MCF 10A (cell line): ENCODE measurements at regions of chr6 and their contacts with region 1.

Region 1: DNA sequence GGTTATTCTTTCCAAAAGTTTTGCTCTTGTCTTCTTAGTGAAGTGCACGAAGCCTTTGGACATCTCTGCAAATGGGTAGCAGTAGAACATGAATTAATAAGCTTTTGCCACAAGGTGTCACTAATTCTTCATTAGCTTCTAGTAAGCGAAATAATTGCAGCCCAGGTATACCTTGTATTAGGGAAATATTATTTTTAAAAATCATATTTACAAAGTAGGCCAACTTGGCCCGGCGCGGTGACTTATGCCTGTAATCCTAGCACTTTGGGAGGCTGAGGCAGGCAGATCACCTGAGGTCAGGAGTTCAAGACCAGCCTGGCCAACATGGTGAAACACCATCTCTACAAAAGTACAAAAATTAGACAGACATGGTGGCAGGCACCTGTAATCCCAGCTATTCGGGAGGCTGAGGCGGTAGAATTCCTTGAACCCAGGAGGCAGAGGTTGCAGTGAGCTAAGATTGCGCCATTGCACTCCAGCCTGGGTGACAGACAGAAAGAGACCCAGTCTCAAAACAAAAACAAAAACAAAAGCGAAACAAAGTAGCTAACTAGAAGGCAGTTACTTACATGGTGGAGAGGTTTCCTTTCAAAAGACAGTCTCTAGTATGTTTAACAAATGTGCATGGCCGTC is 8.8 kb upstream of the RSPH3 start:
- DNase-seq: peak; percentile 53
- H3K4me3 Mint-ChIP-seq: no peak overlapping the region
- H3K27ac Mint-ChIP-seq: no peak overlapping the region
- H3K4me1 Mint-ChIP-seq: no peaks in the 10 kb centered on the region
- H3K27me3 Mint-ChIP-seq: no peaks in the 10 kb centered on the region
- CTCF ChIP-seq: peak; percentile 42

Region 2: DNA sequence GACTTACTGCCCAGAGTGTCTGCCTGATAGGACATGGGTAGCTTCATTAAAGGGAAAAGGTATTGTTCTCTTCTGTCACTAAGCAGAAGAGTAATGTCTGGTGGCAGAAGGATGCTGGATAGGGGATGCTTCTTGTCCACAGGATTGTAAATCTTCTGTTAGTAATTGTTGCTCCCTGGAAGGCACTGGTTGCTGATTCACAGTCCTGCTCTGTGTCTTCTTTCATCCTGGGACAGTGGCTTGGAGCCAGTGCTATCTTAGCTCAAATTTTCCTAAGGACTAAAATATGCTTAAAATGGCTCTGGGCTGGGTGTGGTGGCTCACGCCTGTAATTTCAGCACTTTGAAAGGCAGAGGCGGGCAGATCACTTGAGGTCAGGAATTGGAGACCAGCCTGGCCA is 311.0 kb before region 1 on chr6:
- CTCF ChIA-PET with region 1: no interaction called
- POLR2A ChIA-PET with region 1: no interaction called
- intact Hi-C with region 1: no loop called
- DNase-seq: no peak
- H3K4me3 Mint-ChIP-seq: no peak overlapping the region
- H3K27ac Mint-ChIP-seq: no peak overlapping the region
- H3K4me1 Mint-ChIP-seq: no peaks in the 10 kb centered on the region
- H3K27me3 Mint-ChIP-seq: no peaks in the 10 kb centered on the region
- CTCF ChIP-seq: no peak

Region 3: GRCh38 chr6:158835616-158836221 is 173.1 kb before region 1 on chr6:
- CTCF ChIA-PET with region 1: no interaction called
- POLR2A ChIA-PET with region 1: no interaction called
- intact Hi-C with region 1: no loop called
- DNase-seq: no peak
- H3K4me3 Mint-ChIP-seq: no peak overlapping the region
- H3K27ac Mint-ChIP-seq: no peak overlapping the region
- H3K4me1 Mint-ChIP-seq: peaks cover 7% of the 10 kb centered on the region
- H3K27me3 Mint-ChIP-seq: no peaks in the 10 kb centered on the region
- CTCF ChIP-seq: no peak

Region 4: DNA sequence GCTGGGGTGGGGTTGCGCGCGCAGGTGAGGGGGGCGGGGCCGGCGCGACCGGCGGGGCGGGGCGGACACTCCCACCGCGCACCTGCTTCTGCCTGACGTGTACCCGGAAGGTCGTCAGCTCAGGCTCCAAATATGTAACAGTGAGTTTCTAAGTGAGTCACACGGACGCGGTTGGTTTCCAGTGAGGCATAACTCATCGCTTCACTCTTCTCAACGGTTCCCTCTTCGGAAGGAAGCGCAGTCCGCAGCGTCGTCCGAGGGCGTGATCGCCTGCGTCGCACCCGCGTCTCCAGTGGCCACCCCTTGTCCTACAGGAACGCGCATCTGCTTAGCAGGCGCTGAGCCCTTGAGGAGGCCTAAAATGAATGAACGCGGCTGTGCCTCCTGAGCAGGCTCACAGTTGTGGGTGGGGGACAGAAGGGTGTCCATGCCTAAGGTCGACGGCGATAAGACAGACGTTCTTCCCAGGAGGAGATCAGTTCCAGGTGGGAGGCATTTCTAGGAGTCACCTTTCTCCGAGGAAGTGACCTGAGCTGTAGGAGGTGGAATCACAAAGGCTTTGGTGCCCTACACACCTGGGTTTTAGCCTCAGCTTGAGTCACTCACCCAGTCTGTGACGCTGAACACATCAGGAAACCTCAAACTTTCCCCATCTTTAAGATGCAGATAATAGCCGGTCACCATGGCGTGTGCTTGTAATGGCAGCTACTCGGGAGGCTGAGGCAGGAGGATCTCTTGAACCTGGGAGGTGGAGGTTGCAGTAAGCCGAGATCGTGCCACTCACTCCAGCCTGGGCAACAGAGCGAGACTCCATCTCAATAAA is 138.7 kb before region 1 on chr6:
- CTCF ChIA-PET with region 1: no interaction called
- POLR2A ChIA-PET with region 1: no interaction called
- intact Hi-C with region 1: no loop called
- DNase-seq: peak; percentile 98
- H3K4me3 Mint-ChIP-seq: peak overlapping the region; percentile 83
- H3K27ac Mint-ChIP-seq: peak overlapping the region; percentile 100
- H3K4me1 Mint-ChIP-seq: peaks cover 14% of the 10 kb centered on the region
- H3K27me3 Mint-ChIP-seq: no peaks in the 10 kb centered on the region
- CTCF ChIP-seq: no peak

Region 5: GRCh38 chr6:159042003-159042825 is 33.4 kb after region 1 on chr6:
- CTCF ChIA-PET with region 1: interaction called, 15 read pairs
- POLR2A ChIA-PET with region 1: no interaction called
- intact Hi-C with region 1: loop called (anchors 1 kb)
- DNase-seq: peak; percentile 85
- H3K4me3 Mint-ChIP-seq: no peak overlapping the region
- H3K27ac Mint-ChIP-seq: no peak overlapping the region
- H3K4me1 Mint-ChIP-seq: peaks cover 21% of the 10 kb centered on the region
- H3K27me3 Mint-ChIP-seq: peaks cover 19% of the 10 kb centered on the region
- CTCF ChIP-seq: peak; percentile 81

Region 6: DNA sequence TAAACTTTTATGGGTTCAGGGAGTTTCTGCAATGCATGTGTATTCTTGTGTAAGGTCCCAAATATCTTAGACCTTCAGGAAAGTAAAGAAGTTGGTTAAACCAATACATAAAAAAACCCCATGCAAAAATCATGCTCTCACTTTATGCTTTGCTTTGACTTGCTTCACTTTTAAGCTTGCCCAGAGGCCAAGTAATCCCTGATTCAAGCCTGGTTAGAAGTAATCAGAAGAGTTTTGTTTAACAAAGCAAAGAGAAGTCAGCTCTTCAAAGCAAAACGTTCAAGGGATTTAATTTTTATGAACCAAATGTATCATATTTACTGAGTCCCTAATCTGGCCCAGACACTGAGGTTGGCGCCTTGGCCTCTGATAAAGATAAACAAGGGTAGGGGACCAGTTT is 133.8 kb after region 1 on chr6:
- CTCF ChIA-PET with region 1: interaction called, 182 read pairs
- POLR2A ChIA-PET with region 1: no interaction called
- intact Hi-C with region 1: no loop called
- DNase-seq: no peak
- H3K4me3 Mint-ChIP-seq: no peak overlapping the region
- H3K27ac Mint-ChIP-seq: no peak overlapping the region
- H3K4me1 Mint-ChIP-seq: no peaks in the 10 kb centered on the region
- H3K27me3 Mint-ChIP-seq: peaks cover 38% of the 10 kb centered on the region
- CTCF ChIP-seq: no peak

Region 7: DNA sequence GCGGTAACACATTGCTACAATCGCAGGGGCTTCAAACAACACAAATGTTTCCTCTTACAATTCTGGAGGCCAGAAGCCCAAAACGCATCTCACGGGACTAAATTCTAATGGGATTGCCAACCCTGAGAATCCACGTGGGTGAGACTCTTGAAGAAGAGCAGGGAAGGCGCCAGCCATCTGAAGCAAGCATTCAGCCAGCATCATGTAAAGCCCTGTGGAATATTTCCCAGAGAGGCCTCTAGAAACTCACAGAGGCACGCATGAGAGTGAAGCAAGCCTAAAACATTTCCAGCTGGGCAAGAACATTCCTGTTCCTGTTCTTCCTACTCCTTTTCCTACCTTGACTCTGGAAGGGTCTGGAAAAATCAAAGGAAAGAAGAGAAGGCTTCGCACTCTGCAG is 140.9 kb after region 1 on chr6:
- CTCF ChIA-PET with region 1: interaction called, 26 read pairs
- POLR2A ChIA-PET with region 1: interaction called, 4 read pairs
- intact Hi-C with region 1: no loop called
- DNase-seq: no peak
- H3K4me3 Mint-ChIP-seq: no peak overlapping the region
- H3K27ac Mint-ChIP-seq: no peak overlapping the region
- H3K4me1 Mint-ChIP-seq: peaks cover 5% of the 10 kb centered on the region
- H3K27me3 Mint-ChIP-seq: peaks cover 18% of the 10 kb centered on the region
- CTCF ChIP-seq: no peak